ENCODE measurements at regions of chr3 and their contacts with region 1.

Region 1: DNA sequence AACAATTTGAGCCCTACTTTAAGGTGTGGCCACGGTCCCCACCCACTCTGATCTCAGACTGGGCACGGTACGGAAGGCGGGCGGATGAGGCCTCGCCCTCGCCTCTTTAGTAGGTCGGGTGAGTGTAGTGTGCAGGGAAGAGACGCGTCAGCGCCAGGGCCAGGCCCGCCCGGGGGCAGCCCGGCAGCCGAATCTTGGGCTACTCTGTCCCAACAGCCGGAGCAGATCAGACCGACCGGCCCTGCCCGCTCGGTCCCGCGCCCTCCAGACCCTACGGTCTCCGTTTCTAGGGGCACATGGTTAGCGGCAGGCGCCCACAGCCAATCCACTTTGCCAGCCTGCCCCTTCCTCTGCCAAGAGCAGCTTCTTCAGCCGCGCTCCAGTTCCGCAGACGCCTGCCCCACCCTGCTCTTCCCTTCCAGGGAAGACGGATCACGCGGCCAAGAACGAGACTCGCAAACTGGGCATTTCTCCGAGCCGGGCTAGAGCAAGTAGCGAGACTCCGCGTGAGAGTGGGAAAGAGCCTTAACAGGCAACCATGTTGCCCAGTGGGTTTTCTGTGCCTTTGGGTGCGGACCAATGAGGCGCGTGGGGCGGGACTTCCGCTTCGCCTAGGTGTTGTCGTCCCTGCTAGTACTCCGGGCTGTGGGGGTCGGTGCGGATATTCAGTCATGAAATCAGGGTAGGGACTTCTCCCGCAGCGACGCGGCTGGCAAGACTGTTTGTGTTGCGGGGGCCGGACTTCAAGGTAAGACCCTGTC is at the start of gene RNF13:
- DNase-seq: peak; percentile 94
- H3K4me3 Mint-ChIP-seq: peak within 1 kb of the TSS; percentile 83
- H3K27ac Mint-ChIP-seq: peak within 1 kb of the TSS; percentile 98
- H3K4me1 Mint-ChIP-seq: peaks cover 39% of the 10 kb centered on the region
- H3K27me3 Mint-ChIP-seq: no peaks in the 10 kb centered on the region
- CTCF ChIP-seq: no peak
- total RNA-seq, gene RNF13: 36.5 and 40.4 TPM in 2 replicates

Region 2: GRCh38 chr3:149494022-149494758 is 318.6 kb before region 1 on chr3:
- CTCF ChIA-PET with region 1: interaction called, 8 read pairs
- POLR2A ChIA-PET with region 1: interaction called, 3 read pairs
- intact Hi-C with region 1: loop called (anchors 1 kb)
- DNase-seq: peak; percentile 73
- H3K4me3 Mint-ChIP-seq: no peak overlapping the region
- H3K27ac Mint-ChIP-seq: no peak overlapping the region
- H3K4me1 Mint-ChIP-seq: no peaks in the 10 kb centered on the region
- H3K27me3 Mint-ChIP-seq: peaks cover 15% of the 10 kb centered on the region
- CTCF ChIP-seq: peak; percentile 77

Region 3: GRCh38 chr3:149523512-149524299 is 289.1 kb before region 1 on chr3:
- CTCF ChIA-PET with region 1: no interaction called
- POLR2A ChIA-PET with region 1: no interaction called
- intact Hi-C with region 1: no loop called
- DNase-seq: no peak
- H3K4me3 Mint-ChIP-seq: no peak overlapping the region
- H3K27ac Mint-ChIP-seq: no peak overlapping the region
- H3K4me1 Mint-ChIP-seq: no peaks in the 10 kb centered on the region
- H3K27me3 Mint-ChIP-seq: no peaks in the 10 kb centered on the region
- CTCF ChIP-seq: no peak

Region 4: GRCh38 chr3:149717391-149718056 is 95.3 kb before region 1 on chr3:
- CTCF ChIA-PET with region 1: interaction called, 10 read pairs
- POLR2A ChIA-PET with region 1: no interaction called
- intact Hi-C with region 1: no loop called
- DNase-seq: peak; percentile 76
- H3K4me3 Mint-ChIP-seq: no peak overlapping the region
- H3K27ac Mint-ChIP-seq: no peak overlapping the region
- H3K4me1 Mint-ChIP-seq: no peaks in the 10 kb centered on the region
- H3K27me3 Mint-ChIP-seq: no peaks in the 10 kb centered on the region
- CTCF ChIP-seq: peak; percentile 66

Region 5: DNA sequence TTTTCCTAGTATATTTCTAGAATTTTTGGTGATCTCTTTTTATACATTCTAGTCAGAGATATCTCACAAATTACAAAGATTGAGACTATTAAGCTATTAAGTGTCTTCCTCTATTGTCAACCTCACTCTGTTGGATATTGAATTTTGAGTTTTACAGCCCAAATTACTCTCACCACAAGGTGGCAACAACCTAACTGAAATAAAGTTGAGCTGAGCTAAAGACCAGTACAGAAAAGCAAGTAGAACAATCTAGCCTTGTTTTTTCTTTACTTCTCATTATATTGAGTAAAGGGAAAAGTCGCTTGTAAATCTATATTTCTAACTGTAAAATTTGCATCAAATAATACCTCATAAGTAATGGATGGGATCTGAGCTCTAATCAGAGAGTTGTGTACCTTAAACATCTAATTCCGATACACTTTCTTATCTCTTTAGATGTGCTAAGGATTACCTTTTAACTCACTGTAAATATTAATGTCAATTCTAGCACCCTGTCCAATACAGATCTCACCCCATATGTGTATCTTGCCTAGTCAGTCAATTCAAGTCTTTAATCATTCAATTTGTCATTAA is 46.9 kb before region 1 on chr3:
- CTCF ChIA-PET with region 1: interaction called, 307 read pairs
- POLR2A ChIA-PET with region 1: interaction called, 28 read pairs
- intact Hi-C with region 1: loop called (anchors 1 kb)
- DNase-seq: peak; percentile 34
- H3K4me3 Mint-ChIP-seq: no peak overlapping the region
- H3K27ac Mint-ChIP-seq: no peak overlapping the region
- H3K4me1 Mint-ChIP-seq: no peaks in the 10 kb centered on the region
- H3K27me3 Mint-ChIP-seq: no peaks in the 10 kb centered on the region
- CTCF ChIP-seq: peak; percentile 49

Region 6: GRCh38 chr3:149777414-149778214 is 35.2 kb before region 1 on chr3:
- CTCF ChIA-PET with region 1: interaction called, 307 read pairs
- POLR2A ChIA-PET with region 1: interaction called, 6 read pairs
- intact Hi-C with region 1: no loop called
- DNase-seq: no peak
- H3K4me3 Mint-ChIP-seq: no peak overlapping the region
- H3K27ac Mint-ChIP-seq: no peak overlapping the region
- H3K4me1 Mint-ChIP-seq: no peaks in the 10 kb centered on the region
- H3K27me3 Mint-ChIP-seq: no peaks in the 10 kb centered on the region
- CTCF ChIP-seq: no peak

Region 7: GRCh38 chr3:149792452-149793270 is 20.1 kb before region 1 on chr3 and contains the start of gene ANKUB1:
- CTCF ChIA-PET with region 1: interaction called, 40 read pairs
- POLR2A ChIA-PET with region 1: no interaction called
- intact Hi-C with region 1: no loop called
- DNase-seq: no peak
- H3K4me3 Mint-ChIP-seq: no peak within 1 kb of the TSS
- H3K27ac Mint-ChIP-seq: no peak within 1 kb of the TSS
- H3K4me1 Mint-ChIP-seq: peaks cover 5% of the 10 kb centered on the region
- H3K27me3 Mint-ChIP-seq: no peaks in the 10 kb centered on the region
- CTCF ChIP-seq: no peak
- total RNA-seq, gene ANKUB1: not detected in 2 replicates

Region 8: DNA sequence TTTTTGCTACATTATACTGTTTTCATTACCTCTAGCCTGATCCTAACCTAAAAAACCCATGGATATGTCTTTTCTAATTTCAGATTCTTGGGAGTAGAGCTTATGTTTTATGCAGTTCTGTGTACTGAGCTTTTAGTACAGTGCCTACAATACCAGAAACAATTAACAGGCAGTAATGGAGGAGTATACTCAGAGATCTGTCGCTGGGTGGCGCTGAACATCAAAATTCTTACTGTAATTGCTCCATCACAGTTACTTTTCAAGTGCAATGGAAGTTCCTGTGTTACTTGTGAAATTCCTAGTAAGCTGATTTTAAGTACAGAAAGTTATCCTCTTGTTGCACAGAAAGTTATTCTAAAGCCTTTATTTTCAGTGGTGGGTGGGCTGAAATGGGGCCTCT is 67.1 kb after region 1 on chr3:
- CTCF ChIA-PET with region 1: interaction called, 10 read pairs
- POLR2A ChIA-PET with region 1: interaction called, 3 read pairs
- intact Hi-C with region 1: no loop called
- DNase-seq: peak; percentile 67
- H3K4me3 Mint-ChIP-seq: no peak overlapping the region
- H3K27ac Mint-ChIP-seq: no peak overlapping the region
- H3K4me1 Mint-ChIP-seq: no peaks in the 10 kb centered on the region
- H3K27me3 Mint-ChIP-seq: no peaks in the 10 kb centered on the region
- CTCF ChIP-seq: peak; percentile 48

Region 9: DNA sequence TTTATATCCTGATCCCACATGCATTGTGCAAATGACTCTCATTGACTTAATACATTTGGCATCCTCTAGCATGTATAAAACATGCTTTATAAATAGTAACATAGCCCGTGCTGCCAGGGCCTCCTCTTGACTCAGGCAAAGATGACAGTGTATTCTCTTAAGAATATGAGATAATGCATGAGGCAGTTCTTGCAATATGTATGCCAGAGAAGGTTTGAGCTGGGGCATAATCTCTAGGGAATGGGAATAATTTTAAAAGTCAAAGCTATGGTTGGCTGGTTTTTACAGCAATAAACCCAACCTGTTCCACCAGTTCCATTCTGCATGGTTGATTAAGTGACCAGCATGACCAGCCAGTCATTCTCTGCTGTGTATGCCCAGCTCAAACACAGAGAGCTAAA is 336.9 kb after region 1 on chr3:
- CTCF ChIA-PET with region 1: no interaction called
- POLR2A ChIA-PET with region 1: no interaction called
- intact Hi-C with region 1: no loop called
- DNase-seq: peak; percentile 13
- H3K4me3 Mint-ChIP-seq: no peak overlapping the region
- H3K27ac Mint-ChIP-seq: no peak overlapping the region
- H3K4me1 Mint-ChIP-seq: peaks cover 23% of the 10 kb centered on the region
- H3K27me3 Mint-ChIP-seq: no peaks in the 10 kb centered on the region
- CTCF ChIP-seq: no peak

Region 10: DNA sequence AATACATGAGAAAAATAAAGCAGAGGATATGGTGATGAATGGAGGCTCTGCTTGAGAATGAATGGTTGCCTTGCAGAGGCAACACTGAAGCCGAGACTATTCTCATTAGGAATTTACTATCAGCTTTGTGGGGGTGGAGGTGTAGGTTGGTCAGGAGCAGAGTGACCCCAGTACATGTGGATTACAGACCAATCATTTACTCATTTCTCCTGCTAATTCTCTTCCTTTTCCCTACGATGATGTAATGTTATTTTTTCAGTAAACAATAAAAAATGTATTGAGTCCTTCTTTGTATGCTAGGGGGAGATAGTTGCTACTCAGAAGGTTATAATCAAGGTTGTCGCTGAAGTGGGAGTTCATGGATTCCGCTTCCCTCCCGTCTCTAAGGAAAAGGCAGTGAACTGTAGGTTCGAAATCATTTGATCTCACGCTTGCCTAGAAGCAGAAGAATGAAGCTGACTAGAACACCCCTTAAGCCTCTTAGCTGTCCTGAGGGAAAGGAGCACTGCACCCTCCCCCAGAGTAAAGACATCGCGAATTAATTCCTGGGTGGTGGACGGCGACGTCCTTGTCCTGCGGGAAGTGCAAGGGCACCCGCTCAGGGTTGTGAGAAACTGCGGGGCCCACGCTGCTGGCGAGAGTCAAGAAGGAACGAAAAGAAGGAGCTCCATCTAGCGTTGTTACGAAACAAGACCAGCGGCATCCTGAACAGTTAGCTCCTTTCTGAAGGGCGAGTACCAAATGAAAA is 371.1 kb after region 1 on chr3:
- CTCF ChIA-PET with region 1: no interaction called
- POLR2A ChIA-PET with region 1: no interaction called
- intact Hi-C with region 1: no loop called
- DNase-seq: peak; percentile 84
- H3K4me3 Mint-ChIP-seq: no peak overlapping the region
- H3K27ac Mint-ChIP-seq: no peak overlapping the region
- H3K4me1 Mint-ChIP-seq: peaks cover 7% of the 10 kb centered on the region
- H3K27me3 Mint-ChIP-seq: no peaks in the 10 kb centered on the region
- CTCF ChIP-seq: peak; percentile 70

Region 11: DNA sequence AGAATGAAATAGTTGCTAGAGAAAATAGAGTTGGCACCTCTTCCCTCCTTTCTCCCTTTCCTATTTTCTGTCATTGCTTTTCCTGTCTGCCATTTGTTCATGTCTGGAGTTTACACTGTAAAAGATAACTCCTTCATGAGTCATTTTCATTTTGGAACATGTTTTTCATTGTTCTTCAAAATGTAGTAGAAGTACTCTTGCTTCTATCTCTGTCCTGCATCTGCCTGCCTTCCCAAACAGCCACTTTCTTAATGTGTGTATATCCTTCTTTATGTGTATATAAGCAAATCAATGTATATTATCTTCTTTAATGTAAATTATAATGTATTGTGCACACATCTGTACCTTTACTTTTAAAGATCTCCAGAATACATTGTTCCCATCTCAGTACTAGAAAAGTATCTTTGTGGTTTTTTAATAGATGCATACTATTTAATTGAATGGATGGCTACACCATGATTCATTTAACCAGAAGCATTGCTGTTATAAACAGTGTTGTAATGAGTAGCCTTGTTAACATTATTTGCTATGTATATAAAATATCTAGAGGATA is 636.5 kb after region 1 on chr3:
- CTCF ChIA-PET with region 1: no interaction called
- POLR2A ChIA-PET with region 1: no interaction called
- intact Hi-C with region 1: no loop called
- DNase-seq: peak; percentile 56
- H3K4me3 Mint-ChIP-seq: peak overlapping the region; percentile 43
- H3K27ac Mint-ChIP-seq: peak overlapping the region; percentile 44
- H3K4me1 Mint-ChIP-seq: peaks cover 34% of the 10 kb centered on the region
- H3K27me3 Mint-ChIP-seq: no peaks in the 10 kb centered on the region
- CTCF ChIP-seq: no peak